Activated CD8-positive, alpha-beta T cell treated with anti-CD3 and anti-CD28 coated beads, Interleukin-2, amount 10 ng/mL, durations not matched to agents 7 days and 5 days (primary cell): ENCODE measurements at regions of chr17 and their contacts with region 1.

Region 1: GRCh38 chr17:49997791-49998703 is 3.0 kb upstream of the DLX3 start:
- DNase-seq: peak; percentile 92
- ATAC-seq: peak; percentile 86
- H3K4me3 Mint-ChIP-seq: no peak overlapping the region
- H3K27ac Mint-ChIP-seq: no peak overlapping the region
- H3K4me1 Mint-ChIP-seq: peaks cover 29% of the 10 kb centered on the region
- H3K27me3 Mint-ChIP-seq: peaks cover 57% of the 10 kb centered on the region

Region 2: DNA sequence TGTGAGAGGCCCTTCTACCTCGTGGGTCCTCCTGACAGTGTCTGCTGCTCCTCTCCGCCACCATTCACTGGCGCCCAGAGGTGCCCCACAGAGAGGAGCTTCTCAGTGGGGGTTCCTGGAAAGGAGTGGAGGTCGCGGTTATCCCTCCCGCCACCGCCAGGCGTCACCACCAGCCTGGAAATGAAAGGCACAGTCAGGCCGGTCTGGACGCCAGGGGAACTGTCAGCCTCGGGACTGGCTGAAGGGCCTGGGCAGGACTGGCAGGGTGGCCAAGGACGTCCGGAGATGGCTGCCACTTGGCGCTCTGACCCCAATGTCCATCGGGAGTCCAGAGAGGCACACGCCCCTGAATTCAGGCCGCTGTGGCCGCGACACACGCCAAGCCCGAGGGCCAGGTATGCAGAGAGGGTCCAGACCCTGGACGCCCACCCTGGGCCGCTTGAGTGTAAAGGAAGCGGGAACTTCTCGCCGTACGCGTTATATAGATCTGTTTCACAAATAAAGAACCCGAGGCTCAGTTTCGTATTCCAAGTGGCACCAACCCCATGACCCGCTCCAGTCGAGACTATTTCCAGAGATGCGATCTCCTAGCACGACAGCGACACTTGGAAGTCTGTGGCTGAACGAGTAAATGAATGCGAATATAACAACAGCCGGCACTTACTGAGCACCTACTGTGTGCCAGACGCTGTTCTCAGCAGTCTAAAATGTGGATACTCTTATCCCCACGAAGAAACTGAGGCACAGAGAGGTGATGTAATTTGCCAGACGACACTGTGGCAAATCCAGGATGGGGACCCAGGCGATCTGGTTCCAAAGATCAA is 430.0 kb before region 1 on chr17:
- CTCF ChIA-PET with region 1: interaction called, 51 read pairs
- POLR2A ChIA-PET with region 1: interaction called, 4 read pairs
- DNase-seq: peak; percentile 88
- ATAC-seq: peak; percentile 50
- H3K4me3 Mint-ChIP-seq: peak overlapping the region; percentile 56
- H3K27ac Mint-ChIP-seq: no peak overlapping the region
- H3K4me1 Mint-ChIP-seq: peaks cover 35% of the 10 kb centered on the region
- H3K27me3 Mint-ChIP-seq: peaks cover 30% of the 10 kb centered on the region

Region 3: DNA sequence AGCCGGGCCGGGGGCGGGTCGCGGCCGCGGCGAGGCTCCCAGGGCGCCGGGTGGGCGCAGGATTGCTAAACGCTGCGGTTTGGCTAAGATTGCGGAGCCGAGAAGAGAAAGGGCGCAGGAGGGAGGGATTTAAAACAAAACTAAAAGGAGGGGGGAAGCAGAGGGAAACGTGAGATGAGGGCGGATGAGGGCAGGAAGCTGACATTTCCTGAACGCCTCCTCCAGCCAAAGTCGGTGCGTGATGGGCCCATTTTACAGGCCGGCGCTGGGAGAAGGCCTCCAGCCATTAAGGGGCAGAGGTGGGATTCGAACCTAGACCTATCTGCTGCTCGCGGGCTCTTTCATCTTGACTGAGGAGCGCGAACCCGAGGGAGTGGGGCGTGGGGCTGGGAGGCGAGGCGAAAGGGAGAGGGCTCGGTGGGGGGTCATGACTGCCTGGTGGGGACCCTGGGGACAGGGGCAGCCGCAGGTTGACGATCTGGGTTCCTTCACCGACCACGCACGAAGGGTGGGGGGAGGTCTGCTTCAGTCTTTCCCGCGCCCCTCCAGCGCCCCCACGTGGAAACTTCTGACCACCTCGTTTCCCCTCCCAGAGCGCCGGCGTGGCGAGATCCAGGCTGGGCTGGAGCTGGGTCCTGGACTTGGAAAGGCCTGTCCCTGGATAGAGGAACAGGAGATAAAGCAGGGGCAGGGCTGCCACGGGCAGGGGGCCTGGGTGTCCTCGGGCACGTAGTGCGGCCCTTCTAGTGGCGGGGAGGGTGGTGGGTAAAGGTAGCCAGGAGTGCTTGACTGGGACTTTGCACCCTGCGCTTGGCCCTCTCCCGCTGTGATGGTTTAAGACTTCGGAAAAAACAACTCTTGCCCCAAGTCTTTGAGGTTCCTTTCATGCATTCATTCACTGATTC is 146.4 kb before region 1 on chr17:
- CTCF ChIA-PET with region 1: interaction called, 194 read pairs
- POLR2A ChIA-PET with region 1: no interaction called
- DNase-seq: peak; percentile 78
- ATAC-seq: peak; percentile 75
- H3K4me3 Mint-ChIP-seq: peak overlapping the region; percentile 81
- H3K27ac Mint-ChIP-seq: peak overlapping the region; percentile 89
- H3K4me1 Mint-ChIP-seq: peaks cover 17% of the 10 kb centered on the region
- H3K27me3 Mint-ChIP-seq: peaks cover 14% of the 10 kb centered on the region

Region 4: GRCh38 chr17:49887086-49888028 is 110.7 kb before region 1 on chr17:
- CTCF ChIA-PET with region 1: interaction called, 18 read pairs
- POLR2A ChIA-PET with region 1: no interaction called
- DNase-seq: no peak
- ATAC-seq: no peak
- H3K4me3 Mint-ChIP-seq: no peak overlapping the region
- H3K27ac Mint-ChIP-seq: no peak overlapping the region
- H3K4me1 Mint-ChIP-seq: no peaks in the 10 kb centered on the region
- H3K27me3 Mint-ChIP-seq: peaks cover 36% of the 10 kb centered on the region

Region 5: GRCh38 chr17:49952209-49952911 is 45.7 kb before region 1 on chr17:
- CTCF ChIA-PET with region 1: interaction called, 129 read pairs
- POLR2A ChIA-PET with region 1: no interaction called
- DNase-seq: peak; percentile 89
- ATAC-seq: peak; percentile 96
- H3K4me3 Mint-ChIP-seq: no peak overlapping the region
- H3K27ac Mint-ChIP-seq: no peak overlapping the region
- H3K4me1 Mint-ChIP-seq: no peaks in the 10 kb centered on the region
- H3K27me3 Mint-ChIP-seq: peaks cover 34% of the 10 kb centered on the region

Region 6: GRCh38 chr17:49987681-49988441 is 10.2 kb before region 1 on chr17:
- CTCF ChIA-PET with region 1: interaction called, 24 read pairs
- POLR2A ChIA-PET with region 1: no interaction called
- DNase-seq: no peak
- ATAC-seq: no peak
- H3K4me3 Mint-ChIP-seq: no peak overlapping the region
- H3K27ac Mint-ChIP-seq: no peak overlapping the region
- H3K4me1 Mint-ChIP-seq: peaks cover 4% of the 10 kb centered on the region
- H3K27me3 Mint-ChIP-seq: peaks cover 66% of the 10 kb centered on the region